Mammary epithelial cell (primary cell): ENCODE measurements at regions of chr6 and their contacts with region 1.

Region 1: GRCh38 chr6:89145787-89146646 is at the start of gene PM20D2:
- DNase-seq: peak; percentile 68
- H3K4me3 ChIP-seq: peak within 1 kb of the TSS; percentile 59 to 70 (median 68)
- H3K27ac ChIP-seq: peak within 1 kb of the TSS; percentile 77
- H3K4me1 ChIP-seq: peaks cover 4% of the 10 kb centered on the region
- H3K27me3 ChIP-seq: no peaks in the 10 kb centered on the region
- CTCF ChIP-seq: no peak
- total RNA-seq, gene PM20D2: 9.1 to 10.3 TPM

Region 2: GRCh38 chr6:88749849-88750248 is 396.2 kb before region 1 on chr6:
- CTCF ChIA-PET with region 1: no interaction called
- dilution Hi-C with region 1: no loop called
- in situ Hi-C with region 1: no loop called
- intact Hi-C with region 1: no loop called
- DNase-seq: no peak
- H3K4me3 ChIP-seq: no peak overlapping the region
- H3K27ac ChIP-seq: no peak overlapping the region
- H3K4me1 ChIP-seq: no peaks in the 10 kb centered on the region
- H3K27me3 ChIP-seq: no peaks in the 10 kb centered on the region
- CTCF ChIP-seq: no peak

Region 3: GRCh38 chr6:89035252-89036106 is 110.5 kb before region 1 on chr6:
- CTCF ChIA-PET with region 1: no interaction called
- dilution Hi-C with region 1: no loop called
- in situ Hi-C with region 1: no loop called
- intact Hi-C with region 1: loop called (anchors 2 kb)
- DNase-seq: peak; percentile 100
- H3K4me3 ChIP-seq: peak overlapping the region; percentile 8 to 47 (median 37)
- H3K27ac ChIP-seq: peak overlapping the region; percentile 98
- H3K4me1 ChIP-seq: peaks cover 27% of the 10 kb centered on the region
- H3K27me3 ChIP-seq: no peaks in the 10 kb centered on the region
- CTCF ChIP-seq: no peak

Region 4: DNA sequence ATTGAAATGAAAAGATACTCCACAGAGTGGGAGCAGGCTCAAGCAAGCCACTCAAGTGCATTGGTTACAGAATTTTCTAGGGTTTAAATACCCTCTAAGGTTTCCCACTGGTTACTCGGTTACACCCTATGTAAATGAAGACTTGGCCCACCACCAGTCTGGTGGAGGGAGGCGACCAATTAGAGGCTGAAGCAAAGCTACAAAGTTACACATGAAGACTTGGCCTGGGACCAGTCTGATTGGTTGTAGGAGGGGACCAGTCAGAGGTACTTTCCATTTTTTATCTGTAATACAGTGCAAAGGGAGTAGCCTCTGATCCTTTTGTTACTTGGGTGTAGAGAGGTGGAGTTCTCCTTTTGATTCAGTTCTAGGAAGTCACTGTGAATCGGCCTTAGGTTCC is 35.7 kb before region 1 on chr6:
- CTCF ChIA-PET with region 1: no interaction called
- dilution Hi-C with region 1: no loop called
- in situ Hi-C with region 1: no loop called
- intact Hi-C with region 1: no loop called
- DNase-seq: no peak
- H3K4me3 ChIP-seq: no peak overlapping the region
- H3K27ac ChIP-seq: no peak overlapping the region
- H3K4me1 ChIP-seq: no peaks in the 10 kb centered on the region
- H3K27me3 ChIP-seq: peaks cover 4% of the 10 kb centered on the region
- CTCF ChIP-seq: no peak

Region 5: DNA sequence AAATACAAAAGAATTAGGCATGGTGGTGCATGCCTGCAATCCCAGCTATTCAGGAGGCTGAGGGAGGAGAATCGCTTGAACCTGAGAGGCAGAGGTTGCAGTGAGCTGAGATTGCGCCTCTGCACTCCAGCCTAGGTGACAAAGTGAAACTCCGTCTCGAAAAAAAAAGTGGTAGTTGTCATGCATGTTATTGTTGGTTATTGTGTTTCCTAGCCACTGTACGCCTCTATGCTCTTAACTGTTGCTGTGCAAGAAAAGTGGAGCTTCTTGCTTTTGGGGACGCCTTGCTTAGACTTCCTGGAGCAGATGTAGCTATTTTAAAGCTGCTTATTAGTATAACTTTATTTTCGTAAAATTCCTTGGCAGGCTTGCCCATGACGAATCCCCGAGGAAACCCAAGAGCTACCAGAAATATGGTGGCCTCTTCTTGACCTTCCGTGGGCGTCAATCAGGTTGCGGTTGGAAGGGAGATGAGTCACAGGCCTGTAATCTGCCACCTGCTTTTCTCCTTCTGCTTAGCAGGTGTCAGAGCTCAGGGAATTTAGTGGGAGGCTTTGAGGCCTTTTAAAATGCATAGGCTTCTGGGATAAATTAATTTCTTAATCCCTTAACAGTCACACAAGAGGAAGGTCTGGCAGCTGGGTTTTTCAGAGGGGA is 151.8 kb after region 1 on chr6:
- CTCF ChIA-PET with region 1: no interaction called
- dilution Hi-C with region 1: no loop called
- in situ Hi-C with region 1: no loop called
- intact Hi-C with region 1: loop called (anchors 5 kb)
- DNase-seq: peak; percentile 95
- H3K4me3 ChIP-seq: no peak overlapping the region
- H3K27ac ChIP-seq: no peak overlapping the region
- H3K4me1 ChIP-seq: peaks cover 17% of the 10 kb centered on the region
- H3K27me3 ChIP-seq: peaks cover 15% of the 10 kb centered on the region
- CTCF ChIP-seq: no peak

Region 6: GRCh38 chr6:89708316-89708715 is 562.3 kb after region 1 on chr6:
- CTCF ChIA-PET with region 1: no interaction called
- dilution Hi-C with region 1: no loop called
- in situ Hi-C with region 1: no loop called
- intact Hi-C with region 1: no loop called
- DNase-seq: no peak
- H3K4me3 ChIP-seq: no peak overlapping the region
- H3K27ac ChIP-seq: no peak overlapping the region
- H3K4me1 ChIP-seq: peaks cover 7% of the 10 kb centered on the region
- H3K27me3 ChIP-seq: no peaks in the 10 kb centered on the region
- CTCF ChIP-seq: no peak